ENCODE measurements at regions of chr14 and their contacts with region 1.

Region 1: GRCh38 chr14:69107407-69108003 is 45.4 kb downstream of the DCAF5 start:
- DNase-seq: peak in 1 of 2 donors; percentile 18
- ATAC-seq: peak; percentile 70

Region 2: DNA sequence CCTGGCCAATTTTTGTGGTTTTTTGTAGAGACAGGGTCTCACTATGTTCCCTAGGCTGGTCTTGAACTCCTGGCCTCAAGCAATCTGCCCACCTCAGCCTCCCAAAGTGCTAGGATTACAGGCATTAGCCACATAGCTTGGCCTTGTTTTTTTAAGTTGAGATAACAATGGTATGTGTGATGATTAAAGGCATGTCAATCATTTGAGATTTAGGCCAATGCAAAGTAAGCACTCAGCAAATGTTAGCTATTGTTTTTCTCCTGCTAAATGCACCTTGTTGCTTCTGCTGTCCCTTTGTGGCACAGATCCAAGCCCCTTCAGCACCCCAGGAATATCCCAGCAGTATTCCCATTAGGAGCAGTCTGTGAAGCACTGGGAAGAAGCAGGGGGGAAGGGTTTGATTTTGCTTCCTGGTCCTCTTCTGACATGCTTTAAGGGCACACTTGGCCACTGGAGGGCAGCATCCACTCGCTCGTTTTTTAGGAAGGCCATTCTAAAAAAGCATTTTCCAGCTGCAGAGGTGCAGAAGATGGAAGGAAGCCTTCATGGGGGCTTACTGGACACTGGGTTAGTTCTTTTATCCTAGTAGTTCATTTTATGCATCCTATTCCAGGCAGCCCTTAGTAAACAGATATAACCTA is 244.4 kb before region 1 on chr14:
- intact Hi-C with region 1: loop called in 1 of 2 experiments (anchors 10 kb)
- DNase-seq: peak; percentile 60 to 89
- ATAC-seq: peak; percentile 94

Region 3: DNA sequence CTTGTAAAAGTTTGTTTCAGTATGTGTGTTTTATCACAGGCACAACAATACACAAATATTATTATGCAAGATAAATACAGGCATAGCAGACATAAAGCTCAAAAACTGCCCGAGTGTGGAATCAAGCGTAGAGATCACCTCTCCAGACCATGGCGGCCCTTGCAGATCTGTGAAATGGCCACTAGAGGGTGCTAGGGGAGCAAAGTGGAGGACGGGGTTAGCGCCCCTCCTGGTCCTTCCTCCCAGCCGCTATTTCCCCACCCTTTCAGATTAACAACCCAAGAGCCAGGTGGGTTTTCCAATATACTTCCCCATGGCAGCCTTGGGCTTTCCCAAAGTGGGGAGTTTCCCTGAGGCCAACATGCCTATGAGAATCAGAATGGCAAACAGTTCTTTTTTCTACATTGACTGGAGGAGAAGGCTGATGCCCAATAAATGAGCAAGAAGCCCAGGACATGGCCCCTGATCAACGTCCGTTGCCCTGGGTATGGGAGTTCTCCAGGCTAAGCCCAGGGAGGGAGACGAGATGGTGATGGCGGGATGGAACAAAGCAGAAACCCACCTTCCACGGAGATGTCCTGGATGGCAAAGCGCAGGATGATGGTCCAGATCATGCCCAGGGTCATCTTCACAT is 195.8 kb before region 1 on chr14:
- intact Hi-C with region 1: loop called in 1 of 2 experiments (anchors 10 kb)
- DNase-seq: peak; percentile 54 to 70
- ATAC-seq: peak; percentile 92